ENCODE measurements at regions of chr18 and their contacts with region 1.

Region 1: GRCh38 chr18:31954349-31954748 is 11.4 kb upstream of the TRAPPC8 start:
- DNase-seq: no peak
- H3K4me3 ChIP-seq: no peak overlapping the region
- H3K27ac ChIP-seq: no peak overlapping the region
- H3K4me1 ChIP-seq: no peaks in the 10 kb centered on the region
- H3K27me3 ChIP-seq: no peaks in the 10 kb centered on the region

Region 2: GRCh38 chr18:31555971-31556747 is 398.2 kb before region 1 on chr18:
- in situ Hi-C with region 1: loop called (anchors 25 kb)
- DNase-seq: peak; percentile 67
- H3K4me3 ChIP-seq: no peak overlapping the region
- H3K27ac ChIP-seq: no peak overlapping the region
- H3K4me1 ChIP-seq: no peaks in the 10 kb centered on the region
- H3K27me3 ChIP-seq: peaks cover 3% of the 10 kb centered on the region; the same call in 1 of the 2 replicates

Region 3: GRCh38 chr18:31741097-31741735 is 213.1 kb before region 1 on chr18:
- in situ Hi-C with region 1: loop called (anchors 25 kb)
- DNase-seq: peak; percentile 33
- H3K4me3 ChIP-seq: no peak overlapping the region
- H3K27ac ChIP-seq: no peak overlapping the region
- H3K4me1 ChIP-seq: no peaks in the 10 kb centered on the region
- H3K27me3 ChIP-seq: no peaks in the 10 kb centered on the region; the same call in 1 of the 2 replicates

Measured in GM23248 (cell line).